ENCODE measurements at regions of chr7 and their contacts with region 1.

Region 1: GRCh38 chr7:1664711-1665548 is 5.1 kb upstream of the ELFN1 start:
- DNase-seq: peak; percentile 99
- H3K4me3 ChIP-seq: peak overlapping the region; percentile 55 to 66
- H3K27ac ChIP-seq: peak overlapping the region in 1 of 2 experiments; percentile 91; a peak in 2 of 4 replicates
- H3K4me1 ChIP-seq: peaks cover 0 to 32% of the 10 kb centered on the region in 2 experiments; a peak in 1 of 4 replicates
- H3K27me3 ChIP-seq: peaks cover 55% of the 10 kb centered on the region
- CTCF ChIP-seq: peak; percentile 86
- EP300 ChIP-seq: no peak
- RAD21 ChIP-seq: peak; percentile 85

Region 2: DNA sequence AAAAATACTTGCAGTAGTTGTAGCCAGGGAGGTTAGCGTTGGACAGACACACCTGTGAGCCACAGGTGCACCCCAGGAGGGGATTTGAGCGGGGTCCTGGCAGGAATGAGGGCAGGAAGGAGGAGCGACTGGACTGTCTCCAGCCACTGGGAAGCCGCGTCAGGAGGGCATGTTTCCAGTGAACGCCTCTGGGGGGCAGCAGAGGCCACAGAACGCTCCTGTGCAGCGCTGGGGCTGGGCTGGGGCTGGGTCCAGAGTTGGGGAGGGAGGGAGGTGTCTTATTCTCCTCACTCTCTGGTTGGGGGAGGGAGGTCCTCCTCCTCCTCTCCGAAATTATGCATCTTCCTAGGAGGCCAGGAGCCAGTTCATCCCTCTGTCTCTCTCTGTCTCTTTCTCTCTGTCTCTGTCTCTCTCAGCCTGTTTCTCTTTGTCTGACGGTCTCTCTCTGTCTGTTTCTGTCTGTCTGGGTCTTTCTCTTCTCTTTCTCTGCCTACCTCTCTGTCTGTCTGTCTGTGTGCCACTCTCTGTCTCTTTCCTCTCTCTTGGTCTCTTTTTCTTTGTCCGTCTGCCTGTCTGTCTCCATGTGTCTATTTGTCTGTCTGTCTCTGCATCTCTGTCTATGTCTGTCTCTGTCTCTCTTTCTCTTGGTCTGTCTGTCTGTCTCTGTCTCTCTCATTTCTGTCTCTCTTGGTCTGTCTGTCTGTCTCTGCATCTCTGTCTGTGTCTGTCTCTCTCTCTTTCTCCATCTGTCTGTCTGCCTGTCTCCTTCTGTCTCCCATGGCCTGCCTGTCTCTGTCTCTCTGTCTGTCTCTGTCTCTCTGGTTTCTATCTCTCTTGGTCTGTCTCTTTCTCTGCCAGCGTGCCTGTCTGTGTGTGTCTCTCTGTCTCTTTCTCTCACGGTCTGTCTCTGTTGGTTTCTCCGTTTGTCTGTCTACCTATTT is 85.2 kb before region 1 on chr7:
- CTCF ChIA-PET with region 1: interaction called, 12 read pairs
- POLR2A ChIA-PET with region 1: interaction called, 4 read pairs
- DNase-seq: peak; percentile 93
- H3K4me3 ChIP-seq: no peak overlapping the region
- H3K27ac ChIP-seq: peak overlapping the region in 1 of 2 experiments; percentile 31; a peak in 1 of 4 replicates
- H3K4me1 ChIP-seq: peaks cover 0 to 12% of the 10 kb centered on the region in 2 experiments; a peak in 1 of 4 replicates
- H3K27me3 ChIP-seq: no peaks in the 10 kb centered on the region
- CTCF ChIP-seq: peak; percentile 95
- EP300 ChIP-seq: no peak
- RAD21 ChIP-seq: peak; percentile 98

Region 3: DNA sequence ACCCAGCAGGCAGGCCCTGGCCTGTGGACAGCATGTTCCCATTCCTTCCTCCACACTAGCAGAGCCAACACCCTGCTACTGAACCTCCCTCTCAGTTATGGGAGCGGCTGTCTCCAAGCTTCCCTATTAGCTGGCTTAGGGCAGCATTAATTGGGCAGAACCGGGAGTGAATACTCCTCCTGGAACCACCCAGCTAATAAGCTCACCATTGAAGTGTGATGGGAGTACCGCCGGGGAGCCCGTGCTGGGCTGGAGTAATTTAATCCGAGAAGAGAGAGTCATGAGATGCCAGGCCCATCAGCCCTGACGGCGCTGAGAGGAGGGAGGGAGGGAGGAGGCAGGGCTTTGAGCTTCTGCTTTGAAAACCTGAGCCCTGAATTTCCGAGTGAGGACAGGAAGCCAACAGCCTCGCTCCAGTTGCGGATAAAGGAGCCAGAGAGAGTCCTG is 26.7 kb before region 1 on chr7:
- CTCF ChIA-PET with region 1: interaction called, 16 read pairs
- POLR2A ChIA-PET with region 1: no interaction called
- DNase-seq: no peak
- H3K4me3 ChIP-seq: no peak overlapping the region
- H3K27ac ChIP-seq: peak overlapping the region in 1 of 2 experiments; percentile 99; a peak in 2 of 4 replicates
- H3K4me1 ChIP-seq: peaks cover 0 to 52% of the 10 kb centered on the region in 2 experiments; a peak in 1 of 4 replicates
- H3K27me3 ChIP-seq: 0 out of 2 replicates have a peak, but pooled peaks cover 5% of the 10 kb centered on the region
- CTCF ChIP-seq: no peak
- EP300 ChIP-seq: no peak
- RAD21 ChIP-seq: no peak

Region 4: DNA sequence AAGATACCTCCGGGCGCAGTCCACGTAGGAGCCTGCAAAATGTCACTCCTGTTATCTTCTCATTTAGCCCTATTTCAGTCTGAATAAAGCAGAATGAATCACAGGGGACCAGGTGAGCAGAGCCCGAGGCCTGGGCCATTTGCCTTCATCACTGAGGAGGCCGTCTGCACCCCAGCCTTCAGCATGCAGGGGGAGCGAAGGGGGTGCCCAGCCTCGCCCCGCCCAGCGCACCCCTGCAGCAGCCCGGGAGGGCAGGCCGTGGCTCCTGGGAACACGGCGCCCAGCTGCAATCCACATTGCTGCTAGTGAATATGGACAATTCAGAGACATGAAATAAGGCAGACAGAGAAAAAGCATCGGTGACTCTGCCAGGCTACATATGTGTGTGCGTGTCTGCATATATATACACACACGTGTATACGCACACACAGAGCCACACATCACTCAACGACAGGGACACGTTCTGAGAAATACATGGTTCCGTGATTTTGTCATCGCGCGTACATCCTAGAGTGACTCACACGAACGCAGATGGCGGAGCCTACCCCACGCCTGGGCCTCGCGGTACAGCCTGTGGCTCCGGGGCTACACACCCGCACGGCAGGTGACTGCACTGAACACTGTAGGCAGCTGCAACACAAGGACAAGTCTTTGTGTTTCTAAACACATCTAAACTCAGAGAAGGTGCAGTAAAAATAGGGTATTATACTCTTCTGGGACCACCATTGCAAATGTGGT is 10.0 kb before region 1 on chr7:
- CTCF ChIA-PET with region 1: interaction called, 28 read pairs
- POLR2A ChIA-PET with region 1: no interaction called
- DNase-seq: no peak
- H3K4me3 ChIP-seq: no peak overlapping the region
- H3K27ac ChIP-seq: peak overlapping the region in 1 of 2 experiments; percentile 16; a peak in 1 of 4 replicates
- H3K4me1 ChIP-seq: peaks cover 0 to 41% of the 10 kb centered on the region in 2 experiments; a peak in 1 of 4 replicates
- H3K27me3 ChIP-seq: peaks cover 26% of the 10 kb centered on the region
- CTCF ChIP-seq: no peak
- EP300 ChIP-seq: no peak
- RAD21 ChIP-seq: no peak

Region 5: GRCh38 chr7:1758028-1758858 is 93.3 kb after region 1 on chr7:
- CTCF ChIA-PET with region 1: interaction called, 14 read pairs
- POLR2A ChIA-PET with region 1: no interaction called
- DNase-seq: peak; percentile 80
- H3K4me3 ChIP-seq: no peak overlapping the region
- H3K27ac ChIP-seq: no peak overlapping the region
- H3K4me1 ChIP-seq: no peaks in the 10 kb centered on the region
- H3K27me3 ChIP-seq: no peaks in the 10 kb centered on the region; the same call in 1 of the 2 replicates
- CTCF ChIP-seq: peak; percentile 40
- EP300 ChIP-seq: no peak
- RAD21 ChIP-seq: peak; percentile 71

Measured in SK-N-SH (cell line).